CD4-positive, alpha-beta T cell (primary cell): ENCODE measurements at regions of chr17 and their contacts with region 1.

Region 1: DNA sequence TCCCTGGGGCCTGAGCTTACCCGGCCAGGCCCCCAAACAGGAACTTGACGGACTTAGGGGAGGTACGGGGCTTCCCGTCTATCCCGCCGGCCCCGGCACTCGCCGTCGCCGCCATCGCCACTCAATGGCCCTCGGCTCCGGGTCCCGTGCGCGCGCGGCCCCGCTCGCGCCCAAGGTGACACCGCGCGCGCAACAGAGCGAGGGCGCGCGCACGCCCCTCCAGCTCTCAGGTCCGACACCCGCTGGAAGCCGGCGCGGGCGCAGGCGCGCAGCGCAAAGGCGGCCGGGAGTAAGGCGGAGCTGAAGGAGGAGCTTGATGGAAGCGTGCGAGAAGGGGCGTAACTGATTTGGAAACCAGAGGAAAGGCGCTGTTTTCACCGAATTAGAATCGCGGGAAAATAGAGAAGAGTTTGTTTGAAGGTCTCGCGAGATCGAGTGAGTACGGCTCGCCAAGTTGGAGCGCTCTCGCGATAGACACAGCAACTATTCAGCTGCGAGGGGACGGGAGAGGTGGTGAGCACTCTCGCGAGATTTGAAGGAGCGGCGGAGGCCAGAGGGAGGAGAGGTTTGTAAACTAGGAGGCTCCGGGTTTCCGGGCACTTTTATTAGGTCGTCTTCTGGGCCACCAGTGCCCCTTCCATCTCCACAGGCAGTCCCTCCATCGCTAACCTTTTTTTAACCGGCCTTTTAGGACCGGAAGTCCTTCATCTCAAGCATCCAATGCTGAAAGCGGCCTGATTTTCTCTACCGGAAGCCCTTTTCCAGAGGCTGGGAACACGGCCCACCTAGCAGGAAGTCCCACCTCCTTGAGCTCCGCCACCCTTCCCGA is at the starts of genes RNF167 and SLC25A11:
- DNase-seq: peak; percentile 91 to 100 (median 95)
- ATAC-seq: peak; percentile 83
- H3K4me3 ChIP-seq: peak within 1 kb of the TSS; percentile 100
- H3K4me3 Mint-ChIP-seq: peak within 1 kb of the TSS; percentile 99
- H3K27ac ChIP-seq: peak within 1 kb of the TSS; percentile 89 to 91
- H3K27ac Mint-ChIP-seq: peak within 1 kb of the TSS; percentile 90
- H3K4me1 ChIP-seq: peaks cover 66% of the 10 kb centered on the region
- H3K4me1 Mint-ChIP-seq: peaks cover 59% of the 10 kb centered on the region
- H3K27me3 ChIP-seq: no peaks in the 10 kb centered on the region
- H3K27me3 Mint-ChIP-seq: no peaks in the 10 kb centered on the region
- CTCF ChIP-seq: no peak
- total RNA-seq, gene RNF167: 59.3 to 62.8 TPM
- total RNA-seq, gene SLC25A11: 20.8 to 21.9 TPM

Region 2: DNA sequence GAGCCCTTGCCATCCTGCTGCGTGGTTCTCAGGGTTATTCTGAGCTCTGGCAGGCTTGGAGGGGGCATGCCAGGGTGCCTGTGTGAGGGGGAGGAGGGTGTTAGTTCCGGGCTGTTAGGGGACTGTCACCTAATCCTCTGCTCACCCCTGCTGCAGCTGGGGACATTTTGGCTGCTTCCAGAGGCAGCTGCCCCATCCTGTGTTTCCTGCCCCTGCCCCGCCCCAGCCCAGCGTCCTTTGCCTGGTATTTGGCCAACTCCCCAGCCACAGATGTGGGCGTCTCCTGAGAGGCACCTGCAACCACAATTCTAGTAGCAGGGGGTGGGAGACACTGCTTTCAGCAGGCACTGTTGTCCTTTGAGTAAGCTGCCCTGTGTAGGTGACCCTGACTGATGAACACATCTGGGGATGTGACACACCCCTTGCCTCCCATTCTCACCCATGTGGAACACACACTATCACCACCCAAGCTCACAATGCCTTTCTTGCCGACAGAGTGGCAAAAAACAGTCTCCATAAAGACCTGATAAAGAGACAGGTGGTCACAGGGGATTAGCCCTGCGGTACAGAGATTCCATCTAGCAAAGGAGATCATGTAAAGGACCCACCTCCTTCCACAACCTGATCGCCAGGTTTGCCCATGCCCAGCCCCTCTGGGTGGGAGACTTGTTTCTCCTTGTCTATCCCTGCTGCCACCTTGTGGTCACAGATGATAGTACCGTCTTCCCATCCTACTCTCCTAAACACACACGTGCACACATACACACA is 36.8 kb before region 1 on chr17 and contains the start of gene CHRNE:
- CTCF ChIA-PET with region 1: interaction called, 4 read pairs
- POLR2A ChIA-PET with region 1: interaction called, 31 read pairs
- intact Hi-C with region 1: loop called (anchors 2 to 5 kb)
- DNase-seq: peak; percentile 55 to 91 (median 70)
- ATAC-seq: peak; percentile 33
- H3K4me3 ChIP-seq: no peak within 1 kb of the TSS
- H3K4me3 Mint-ChIP-seq: peak within 1 kb of the TSS; percentile 76
- H3K27ac ChIP-seq: no peak within 1 kb of the TSS
- H3K27ac Mint-ChIP-seq: peak within 1 kb of the TSS; percentile 94
- H3K4me1 ChIP-seq: peaks cover 54% of the 10 kb centered on the region
- H3K4me1 Mint-ChIP-seq: peaks cover 35% of the 10 kb centered on the region
- H3K27me3 ChIP-seq: no peaks in the 10 kb centered on the region
- H3K27me3 Mint-ChIP-seq: peaks cover 10% of the 10 kb centered on the region
- CTCF ChIP-seq: peak; percentile 89
- total RNA-seq, gene CHRNE: 3.2 to 3.7 TPM

Region 3: DNA sequence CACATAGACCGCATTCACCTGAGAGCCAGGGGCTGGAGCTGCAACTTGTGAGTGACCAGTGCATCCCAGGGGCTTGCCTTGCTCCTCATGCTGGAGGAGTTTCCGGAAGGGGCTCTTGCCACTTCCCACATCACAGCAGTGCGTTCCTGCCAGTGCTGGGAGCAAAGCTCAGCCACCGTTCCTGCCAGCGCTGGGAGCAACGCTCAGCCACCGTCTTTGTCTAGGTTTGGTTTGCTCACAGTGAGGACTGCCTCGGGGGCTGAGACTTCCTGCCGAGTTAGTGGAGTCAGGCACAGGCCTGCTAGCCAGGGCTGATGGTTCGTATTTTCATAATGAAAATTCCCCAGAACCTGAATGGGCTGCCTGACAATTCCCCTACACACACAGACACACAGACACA is 31.7 kb before region 1 on chr17:
- CTCF ChIA-PET with region 1: interaction called, 10 read pairs
- POLR2A ChIA-PET with region 1: interaction called, 19 read pairs
- intact Hi-C with region 1: loop called (anchors 2 to 5 kb)
- DNase-seq: peak in 2 of 14 experiments; percentile 30 to 51
- ATAC-seq: no peak
- H3K4me3 ChIP-seq: no peak overlapping the region
- H3K4me3 Mint-ChIP-seq: no peak overlapping the region
- H3K27ac ChIP-seq: no peak overlapping the region
- H3K27ac Mint-ChIP-seq: no peak overlapping the region
- H3K4me1 ChIP-seq: peaks cover 24% of the 10 kb centered on the region
- H3K4me1 Mint-ChIP-seq: peaks cover 5% of the 10 kb centered on the region
- H3K27me3 ChIP-seq: no peaks in the 10 kb centered on the region
- H3K27me3 Mint-ChIP-seq: no peaks in the 10 kb centered on the region
- CTCF ChIP-seq: no peak

Region 4: DNA sequence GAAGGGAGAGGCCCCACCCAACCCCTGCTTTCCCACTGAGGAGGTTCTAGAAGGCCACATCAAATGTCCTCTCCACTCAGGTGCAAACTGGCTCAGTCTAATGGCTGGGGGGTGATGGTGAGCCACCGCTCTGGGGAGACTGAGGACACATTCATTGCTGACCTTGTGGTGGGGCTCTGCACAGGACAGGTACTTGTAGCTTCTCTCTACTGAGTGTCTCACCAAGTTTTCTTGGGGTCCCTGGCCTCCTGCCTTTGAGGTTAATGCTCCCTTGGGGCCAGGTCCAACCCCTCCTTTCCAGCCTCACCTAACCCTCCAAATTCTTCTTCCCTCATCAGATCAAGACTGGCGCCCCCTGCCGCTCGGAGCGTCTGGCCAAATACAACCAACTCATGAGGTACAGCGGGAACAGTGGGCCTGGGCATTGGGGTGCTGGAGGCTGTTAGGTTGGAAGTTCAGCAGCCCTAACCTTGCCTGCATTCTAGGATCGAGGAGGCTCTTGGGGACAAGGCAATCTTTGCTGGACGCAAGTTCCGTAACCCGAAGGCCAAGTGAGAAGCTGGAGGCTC is 16.6 kb after region 1 on chr17:
- CTCF ChIA-PET with region 1: no interaction called
- POLR2A ChIA-PET with region 1: interaction called, 137 read pairs
- intact Hi-C with region 1: no loop called
- DNase-seq: peak in 12 of 14 experiments; percentile 26 to 75 (median 44)
- ATAC-seq: peak; percentile 24
- H3K4me3 ChIP-seq: no peak overlapping the region
- H3K4me3 Mint-ChIP-seq: no peak overlapping the region
- H3K27ac ChIP-seq: no peak overlapping the region
- H3K27ac Mint-ChIP-seq: no peak overlapping the region
- H3K4me1 ChIP-seq: no peaks in the 10 kb centered on the region
- H3K4me1 Mint-ChIP-seq: peaks cover 6% of the 10 kb centered on the region
- H3K27me3 ChIP-seq: no peaks in the 10 kb centered on the region
- H3K27me3 Mint-ChIP-seq: no peaks in the 10 kb centered on the region
- CTCF ChIP-seq: peak; percentile 20

Region 5: DNA sequence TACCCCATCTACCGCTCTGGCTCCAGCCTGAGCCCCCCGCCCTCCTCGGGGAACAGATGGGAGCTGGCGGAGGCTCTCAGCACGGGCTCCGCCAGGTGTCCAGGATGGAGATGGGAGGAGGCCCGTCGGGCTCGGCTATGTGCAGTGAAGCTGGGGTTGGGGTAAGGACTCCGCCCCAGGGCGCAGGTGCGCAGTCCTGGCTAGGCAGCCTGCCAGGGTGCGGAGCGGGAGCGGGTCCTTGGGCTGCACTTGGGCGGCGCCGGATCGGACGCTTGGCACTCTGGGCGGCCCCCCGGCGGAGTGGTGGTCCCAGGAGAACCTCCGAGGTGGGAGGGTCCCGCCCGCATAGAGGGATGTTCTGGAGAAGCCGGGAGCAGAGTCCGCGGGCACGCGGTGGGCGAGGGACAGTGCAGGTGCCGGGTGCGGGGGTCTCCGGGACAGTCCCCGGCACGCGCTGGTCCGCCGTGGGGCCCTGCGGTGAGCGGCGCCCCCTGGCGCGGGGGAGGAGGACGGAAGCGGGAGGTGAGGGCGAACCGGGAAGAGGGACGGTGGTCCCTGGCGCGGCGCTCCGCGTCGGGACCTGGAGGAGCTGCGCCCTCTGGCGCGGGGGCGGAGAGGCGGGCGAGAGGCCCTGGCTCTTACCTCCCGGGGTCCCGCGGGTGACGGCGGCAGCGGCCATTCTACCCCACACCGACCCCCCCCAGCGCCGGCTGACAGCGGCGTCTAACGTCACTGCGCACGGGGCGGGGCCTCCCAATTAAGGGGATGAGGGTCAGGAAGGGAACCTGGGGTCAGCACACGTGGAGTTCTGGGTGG is 47.1 kb after region 1 on chr17 and contains the start of gene CAMTA2:
- CTCF ChIA-PET with region 1: interaction called, 5 read pairs
- POLR2A ChIA-PET with region 1: interaction called, 21 read pairs
- intact Hi-C with region 1: loop called in 1 of 2 experiments (anchors 5 kb)
- DNase-seq: peak; percentile 74 to 92 (median 86)
- ATAC-seq: peak; percentile 90
- H3K4me3 ChIP-seq: peak within 1 kb of the TSS; percentile 99
- H3K4me3 Mint-ChIP-seq: peak within 1 kb of the TSS; percentile 94
- H3K27ac ChIP-seq: peak within 1 kb of the TSS; percentile 90 to 92
- H3K27ac Mint-ChIP-seq: peak within 1 kb of the TSS; percentile 87
- H3K4me1 ChIP-seq: peaks cover 36% of the 10 kb centered on the region
- H3K4me1 Mint-ChIP-seq: peaks cover 40% of the 10 kb centered on the region
- H3K27me3 ChIP-seq: no peaks in the 10 kb centered on the region
- H3K27me3 Mint-ChIP-seq: no peaks in the 10 kb centered on the region
- CTCF ChIP-seq: peak; percentile 91
- total RNA-seq, gene CAMTA2: 41.6 to 51.3 TPM

Region 6: DNA sequence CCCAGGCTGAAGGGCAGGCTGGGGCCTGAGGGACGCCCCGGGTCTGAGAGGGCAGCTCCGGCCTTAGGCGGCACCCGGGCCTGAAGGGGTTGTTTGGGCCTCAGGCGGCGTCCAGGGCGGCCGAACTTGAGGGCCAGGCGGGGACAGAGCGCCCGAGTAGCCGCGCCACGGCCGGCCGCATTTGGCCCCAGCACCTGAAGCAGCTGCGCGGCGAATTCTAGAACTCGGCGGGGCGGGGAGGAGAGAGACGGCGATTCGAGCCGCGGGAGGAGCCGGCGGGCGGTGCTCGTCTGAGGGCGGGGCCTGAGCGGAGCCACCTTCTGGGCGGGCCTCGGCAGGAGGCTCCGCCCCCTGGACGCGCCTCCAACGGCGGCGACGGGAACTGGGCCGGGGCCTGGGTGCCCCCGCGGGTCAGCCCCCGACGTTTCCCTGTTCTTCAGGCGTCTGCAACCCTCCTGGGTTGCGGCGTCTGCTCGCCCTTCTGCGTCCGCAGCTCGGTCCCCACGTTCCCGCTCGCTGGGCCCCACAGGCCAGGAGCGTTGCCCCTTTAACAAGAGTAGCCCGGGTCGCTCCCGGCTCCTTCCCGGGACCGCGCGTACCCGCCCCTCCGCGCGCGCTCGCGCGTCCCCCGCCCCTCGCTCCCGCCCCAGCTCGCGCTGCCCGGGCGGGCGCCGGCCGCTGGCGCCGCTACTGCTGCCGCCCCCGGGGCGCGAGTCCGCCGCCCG is 57.5 kb after region 1 on chr17 and contains the starts of genes INCA1 and KIF1C:
- CTCF ChIA-PET with region 1: no interaction called
- POLR2A ChIA-PET with region 1: interaction called, 38 read pairs
- intact Hi-C with region 1: loop called in 1 of 2 experiments (anchors 2 kb)
- DNase-seq: peak; percentile 83 to 96 (median 89)
- ATAC-seq: peak; percentile 98
- H3K4me3 ChIP-seq: peak within 1 kb of the TSS; percentile 62
- H3K4me3 Mint-ChIP-seq: peak within 1 kb of the TSS; percentile 85
- H3K27ac ChIP-seq: peak within 1 kb of the TSS; percentile 22 to 69
- H3K27ac Mint-ChIP-seq: peak within 1 kb of the TSS; percentile 81
- H3K4me1 ChIP-seq: peaks cover 24% of the 10 kb centered on the region
- H3K4me1 Mint-ChIP-seq: peaks cover 25% of the 10 kb centered on the region
- H3K27me3 ChIP-seq: no peaks in the 10 kb centered on the region
- H3K27me3 Mint-ChIP-seq: no peaks in the 10 kb centered on the region
- CTCF ChIP-seq: no peak
- total RNA-seq, gene INCA1: 0.19 TPM in 1 of 2 experiments, not detected in the other
- total RNA-seq, gene KIF1C: 10.2 to 12.2 TPM